CD8-positive, alpha-beta T cell (primary cell): ENCODE measurements at regions of chr17 and their contacts with region 1.

Region 1: GRCh38 chr17:48618256-48618897 is 3.3 kb upstream of the HOXB8 start:
- DNase-seq: peak; percentile 66 to 90 (median 85)
- ATAC-seq: peak; percentile 72
- H3K4me3 ChIP-seq: no peak overlapping the region
- H3K4me3 Mint-ChIP-seq: peak overlapping the region; percentile 42
- H3K27ac ChIP-seq: no peak overlapping the region
- H3K27ac Mint-ChIP-seq: no peak overlapping the region
- H3K4me1 ChIP-seq: peaks cover 35% of the 10 kb centered on the region
- H3K4me1 Mint-ChIP-seq: peaks cover 33% of the 10 kb centered on the region
- H3K27me3 ChIP-seq: peaks cover 64 to 70% of the 10 kb centered on the region in 2 experiments
- H3K27me3 Mint-ChIP-seq: peaks cover 86% of the 10 kb centered on the region
- CTCF ChIP-seq: peak; percentile 98

Region 2: GRCh38 chr17:47776330-47777197 is 841.8 kb before region 1 on chr17:
- CTCF ChIA-PET with region 1: no interaction called
- POLR2A ChIA-PET with region 1: no interaction called
- intact Hi-C with region 1: loop called in 1 of 2 experiments (anchors 5 kb)
- DNase-seq: peak in 6 of 9 experiments; percentile 24 to 73 (median 32)
- ATAC-seq: peak; percentile 96
- H3K4me3 ChIP-seq: no peak overlapping the region
- H3K4me3 Mint-ChIP-seq: no peak overlapping the region
- H3K27ac ChIP-seq: no peak overlapping the region
- H3K27ac Mint-ChIP-seq: no peak overlapping the region
- H3K4me1 ChIP-seq: no peaks in the 10 kb centered on the region
- H3K4me1 Mint-ChIP-seq: peaks cover 3% of the 10 kb centered on the region
- H3K27me3 ChIP-seq: peaks cover 8 to 11% of the 10 kb centered on the region in 2 experiments
- H3K27me3 Mint-ChIP-seq: peaks cover 41% of the 10 kb centered on the region
- CTCF ChIP-seq: peak; percentile 88

Region 3: DNA sequence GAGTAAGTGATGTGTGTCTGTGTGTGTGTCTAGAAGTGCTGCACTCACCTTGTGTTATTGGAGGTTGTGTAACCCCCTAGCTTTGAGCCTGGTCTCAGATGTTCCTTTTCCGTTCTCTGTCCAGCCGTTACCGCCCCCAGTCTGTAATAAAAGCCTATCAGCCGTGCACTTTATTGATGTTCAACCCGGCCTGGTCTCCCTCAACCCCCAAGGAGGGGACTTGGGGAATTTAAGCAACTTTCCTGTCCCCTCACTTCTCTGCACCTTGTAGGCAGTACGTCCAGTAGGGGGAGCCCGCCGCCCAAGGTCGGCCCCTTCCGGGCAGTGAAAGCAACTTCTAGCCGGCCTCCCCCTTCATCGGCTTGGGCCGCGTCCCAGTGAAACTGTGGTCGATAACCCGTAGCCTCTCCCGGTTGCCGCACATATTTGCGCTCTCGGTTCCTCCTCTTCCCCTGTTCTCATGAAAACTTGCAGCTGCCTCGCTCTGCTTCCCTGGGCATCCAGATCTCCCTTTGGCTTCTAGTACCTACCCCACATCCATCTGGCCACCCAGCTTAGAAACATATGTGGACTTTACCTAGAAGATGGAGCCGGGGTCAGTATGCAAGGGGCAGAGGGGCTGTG is 669.1 kb before region 1 on chr17:
- CTCF ChIA-PET with region 1: no interaction called
- POLR2A ChIA-PET with region 1: no interaction called
- intact Hi-C with region 1: loop called in 1 of 2 experiments (anchors 1 kb)
- DNase-seq: peak; percentile 47 to 88 (median 79)
- ATAC-seq: peak; percentile 53
- H3K4me3 ChIP-seq: peak overlapping the region; percentile 26 to 36
- H3K4me3 Mint-ChIP-seq: peak overlapping the region; percentile 82
- H3K27ac ChIP-seq: peak overlapping the region in 1 of 2 experiments; percentile 28
- H3K27ac Mint-ChIP-seq: peak overlapping the region; percentile 81
- H3K4me1 ChIP-seq: peaks cover 51% of the 10 kb centered on the region
- H3K4me1 Mint-ChIP-seq: peaks cover 46% of the 10 kb centered on the region
- H3K27me3 ChIP-seq: no peaks in the 10 kb centered on the region
- H3K27me3 Mint-ChIP-seq: no peaks in the 10 kb centered on the region
- CTCF ChIP-seq: peak; percentile 78

Region 4: DNA sequence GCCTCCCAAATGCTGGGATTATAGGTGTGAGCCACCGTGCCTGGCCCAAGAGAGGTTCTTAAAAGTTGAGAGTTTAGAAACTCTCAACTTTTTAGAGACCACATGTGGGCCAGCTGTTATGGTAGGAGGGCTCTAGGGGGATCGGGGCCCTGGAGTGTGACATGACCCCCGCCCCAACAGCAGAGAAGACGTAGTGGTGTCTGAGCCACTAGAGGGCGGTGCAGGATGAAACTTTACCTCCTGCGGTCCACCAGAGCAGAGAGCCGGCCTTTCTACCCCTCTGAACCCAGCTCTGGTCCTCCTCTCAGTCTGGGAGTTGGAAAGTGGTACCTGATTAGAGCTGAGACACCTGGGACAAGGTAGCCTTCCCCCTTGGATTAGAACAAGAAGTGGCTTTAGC is 640.1 kb before region 1 on chr17:
- CTCF ChIA-PET with region 1: no interaction called
- POLR2A ChIA-PET with region 1: no interaction called
- intact Hi-C with region 1: no loop called
- DNase-seq: peak; percentile 8 to 65 (median 49)
- ATAC-seq: peak; percentile 68
- H3K4me3 ChIP-seq: no peak overlapping the region
- H3K4me3 Mint-ChIP-seq: no peak overlapping the region
- H3K27ac ChIP-seq: no peak overlapping the region
- H3K27ac Mint-ChIP-seq: no peak overlapping the region
- H3K4me1 ChIP-seq: no peaks in the 10 kb centered on the region
- H3K4me1 Mint-ChIP-seq: peaks cover 6% of the 10 kb centered on the region
- H3K27me3 ChIP-seq: no peaks in the 10 kb centered on the region
- H3K27me3 Mint-ChIP-seq: no peaks in the 10 kb centered on the region
- CTCF ChIP-seq: peak; percentile 58

Region 5: DNA sequence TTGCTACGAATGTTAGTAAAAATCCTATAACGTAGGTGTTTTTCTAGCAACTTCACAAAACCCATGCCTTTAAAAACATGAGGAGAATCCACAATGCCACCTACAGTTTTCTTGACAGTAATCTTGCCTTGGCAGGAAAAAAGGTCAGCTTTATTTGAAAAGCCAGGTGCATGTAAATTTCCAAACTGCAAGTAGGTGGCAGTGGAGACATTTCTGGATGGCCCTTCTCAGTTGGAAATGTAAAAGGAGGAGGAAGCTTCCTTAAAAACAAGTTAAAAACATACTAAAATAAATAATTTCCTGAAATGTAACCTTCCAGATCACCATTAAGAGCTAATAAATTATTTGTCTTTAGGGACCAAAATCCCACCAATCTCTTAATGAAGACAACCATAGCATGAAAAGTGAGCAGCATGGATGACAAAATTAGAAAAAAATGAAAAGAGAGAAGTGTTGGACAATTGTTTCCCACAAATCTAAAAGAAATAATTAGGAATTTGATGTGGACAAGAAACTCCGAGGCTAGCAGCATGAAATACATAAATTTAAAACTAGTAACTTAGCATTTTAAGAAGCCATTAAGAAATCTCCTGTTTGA is 358.6 kb before region 1 on chr17:
- CTCF ChIA-PET with region 1: interaction called, 7 read pairs
- POLR2A ChIA-PET with region 1: no interaction called
- intact Hi-C with region 1: loop called in 1 of 2 experiments (anchors 2 kb)
- DNase-seq: peak in 2 of 9 experiments; percentile 10 to 23
- ATAC-seq: no peak
- H3K4me3 ChIP-seq: no peak overlapping the region
- H3K4me3 Mint-ChIP-seq: no peak overlapping the region
- H3K27ac ChIP-seq: no peak overlapping the region
- H3K27ac Mint-ChIP-seq: no peak overlapping the region
- H3K4me1 ChIP-seq: no peaks in the 10 kb centered on the region
- H3K4me1 Mint-ChIP-seq: peaks cover 9% of the 10 kb centered on the region
- H3K27me3 ChIP-seq: no peaks in the 10 kb centered on the region
- H3K27me3 Mint-ChIP-seq: no peaks in the 10 kb centered on the region
- CTCF ChIP-seq: peak; percentile 42

Region 6: DNA sequence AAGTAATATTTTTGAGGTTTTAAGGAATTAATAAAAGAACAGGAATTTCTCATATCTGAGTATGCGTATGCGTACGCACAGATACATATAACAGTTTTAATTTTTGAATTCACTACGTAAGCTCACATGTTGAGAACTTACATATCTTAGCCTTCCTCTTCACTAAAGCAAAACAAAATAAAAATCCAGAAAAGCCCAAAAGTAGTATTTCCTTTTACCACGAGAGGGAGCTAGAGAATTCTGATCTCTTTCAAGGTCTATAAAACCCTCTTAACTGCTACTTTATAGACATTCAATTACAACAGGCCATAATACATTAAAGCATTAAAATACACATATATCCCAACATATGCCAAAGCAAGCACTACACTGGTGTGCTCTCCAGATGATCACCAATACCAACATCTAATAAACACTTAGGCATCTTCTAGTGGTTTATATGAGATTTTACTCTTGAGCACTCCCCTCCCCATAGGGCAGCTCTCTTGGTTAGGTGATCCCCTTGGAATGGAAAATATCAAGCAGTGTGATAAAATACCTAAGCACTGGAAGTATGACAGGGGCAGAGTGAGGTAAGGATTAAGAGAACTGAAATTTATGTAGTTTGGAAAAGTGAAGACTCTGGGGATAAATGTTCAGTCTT is 282.4 kb before region 1 on chr17:
- CTCF ChIA-PET with region 1: interaction called, 4 read pairs
- POLR2A ChIA-PET with region 1: interaction called, 3 read pairs
- intact Hi-C with region 1: loop called in 1 of 2 experiments (anchors 1 kb)
- DNase-seq: peak in 2 of 9 experiments; percentile 68 to 76
- ATAC-seq: peak; percentile 67
- H3K4me3 ChIP-seq: no peak overlapping the region
- H3K4me3 Mint-ChIP-seq: no peak overlapping the region
- H3K27ac ChIP-seq: no peak overlapping the region
- H3K27ac Mint-ChIP-seq: no peak overlapping the region
- H3K4me1 ChIP-seq: no peaks in the 10 kb centered on the region
- H3K4me1 Mint-ChIP-seq: peaks cover 9% of the 10 kb centered on the region
- H3K27me3 ChIP-seq: no peaks in the 10 kb centered on the region
- H3K27me3 Mint-ChIP-seq: no peaks in the 10 kb centered on the region
- CTCF ChIP-seq: peak; percentile 65

Region 7: GRCh38 chr17:48558057-48558830 is 60.1 kb before region 1 on chr17:
- CTCF ChIA-PET with region 1: no interaction called
- POLR2A ChIA-PET with region 1: no interaction called
- intact Hi-C with region 1: no loop called
- DNase-seq: no peak
- ATAC-seq: no peak
- H3K4me3 ChIP-seq: no peak overlapping the region
- H3K4me3 Mint-ChIP-seq: no peak overlapping the region
- H3K27ac ChIP-seq: no peak overlapping the region
- H3K27ac Mint-ChIP-seq: no peak overlapping the region
- H3K4me1 ChIP-seq: peaks cover 10% of the 10 kb centered on the region
- H3K4me1 Mint-ChIP-seq: peaks cover 12% of the 10 kb centered on the region
- H3K27me3 ChIP-seq: peaks cover 0 to 2% of the 10 kb centered on the region in 2 experiments
- H3K27me3 Mint-ChIP-seq: peaks cover 3% of the 10 kb centered on the region
- CTCF ChIP-seq: no peak

Region 8: DNA sequence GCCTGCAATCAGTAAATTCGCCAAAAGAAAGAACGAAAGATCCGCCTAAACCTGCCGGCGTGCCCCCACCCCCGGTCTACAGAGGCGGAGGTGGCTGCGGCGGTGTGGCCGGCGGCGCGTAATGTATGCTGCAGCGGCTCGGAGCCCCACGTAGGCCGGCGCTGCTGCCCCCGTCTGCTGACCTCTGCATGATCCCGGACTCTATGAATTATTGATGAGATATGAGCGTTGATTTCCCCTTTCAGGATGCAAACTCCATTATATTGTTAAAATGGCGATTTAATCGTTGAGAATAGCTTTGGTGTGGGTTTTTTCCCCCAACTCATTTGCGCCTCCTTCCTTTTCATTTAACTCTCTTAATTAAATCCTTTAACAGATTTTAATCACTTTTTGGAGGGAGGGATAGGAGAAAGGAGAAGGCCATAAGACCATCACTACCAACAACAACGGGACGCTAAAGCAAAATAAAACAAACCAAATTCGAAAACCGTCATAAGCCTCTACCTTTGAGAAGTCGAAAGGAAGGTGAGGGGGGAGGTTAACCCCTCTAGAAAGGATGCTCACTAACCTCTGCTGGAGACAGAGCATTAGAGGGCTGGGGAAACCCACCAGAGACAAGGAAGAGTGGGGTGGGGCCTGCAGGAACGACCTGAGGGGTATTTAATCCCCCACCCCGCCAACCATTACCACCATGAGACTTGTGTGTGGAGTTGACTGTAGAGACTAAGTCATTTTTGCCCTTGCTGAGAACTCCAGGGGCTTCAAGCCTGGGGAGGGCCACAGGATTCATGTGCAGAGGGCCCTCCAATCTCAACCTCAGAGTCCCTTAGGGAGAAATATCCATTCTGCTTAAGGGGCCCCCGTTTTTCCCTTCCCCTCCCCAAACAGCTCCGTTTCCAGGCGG is 31.8 kb before region 1 on chr17:
- CTCF ChIA-PET with region 1: interaction called, 32 read pairs
- POLR2A ChIA-PET with region 1: no interaction called
- intact Hi-C with region 1: no loop called
- DNase-seq: peak in 4 of 9 experiments; percentile 29 to 60 (median 48)
- ATAC-seq: peak; percentile 22
- H3K4me3 ChIP-seq: peak overlapping the region; percentile 75 to 81
- H3K4me3 Mint-ChIP-seq: peak overlapping the region; percentile 96
- H3K27ac ChIP-seq: no peak overlapping the region
- H3K27ac Mint-ChIP-seq: peak overlapping the region; percentile 2
- H3K4me1 ChIP-seq: peaks cover 27% of the 10 kb centered on the region
- H3K4me1 Mint-ChIP-seq: peaks cover 32% of the 10 kb centered on the region
- H3K27me3 ChIP-seq: peaks cover 12 to 46% of the 10 kb centered on the region in 2 experiments
- H3K27me3 Mint-ChIP-seq: peaks cover 83% of the 10 kb centered on the region
- CTCF ChIP-seq: no peak

Region 9: DNA sequence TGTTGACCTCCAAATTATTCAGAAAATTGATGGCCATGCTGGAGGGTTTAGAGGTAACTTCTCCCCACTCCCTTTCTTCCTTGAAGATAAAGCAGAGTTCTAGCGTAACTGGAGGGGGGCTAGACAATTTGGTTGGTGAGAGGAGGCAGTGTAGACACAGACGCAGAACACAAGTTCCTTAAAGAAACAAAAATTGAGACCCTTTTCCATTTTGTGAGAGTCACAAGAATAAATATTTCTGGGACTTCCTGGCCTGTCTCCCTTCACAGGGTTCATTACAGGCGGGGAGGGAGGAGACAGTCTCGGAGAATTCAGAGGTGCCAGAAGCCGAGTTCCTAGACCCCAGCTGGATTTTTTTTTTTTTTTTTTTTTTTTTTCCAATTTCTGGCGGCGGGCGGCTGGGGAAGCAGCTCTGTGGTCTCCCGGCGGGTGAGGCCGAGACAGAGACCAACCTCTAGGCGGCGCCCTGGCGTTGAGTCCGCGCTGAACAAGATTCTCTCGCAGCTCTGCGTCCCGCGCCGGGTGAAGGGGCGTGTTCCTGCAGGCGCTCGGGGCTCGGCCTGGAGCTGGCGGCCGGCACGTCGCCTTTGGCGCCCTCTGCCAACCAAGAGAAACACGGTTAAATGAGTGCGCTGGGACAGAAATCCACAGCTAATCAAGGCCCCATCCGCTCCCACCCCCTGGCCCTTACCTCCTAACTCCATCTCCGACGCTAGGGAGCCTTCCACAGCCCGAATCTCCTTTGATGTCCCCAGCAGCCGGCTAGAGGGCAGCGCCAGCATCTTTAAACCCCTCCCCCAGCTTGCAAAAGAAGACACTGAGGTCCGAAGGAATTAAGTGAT is 18.0 kb after region 1 on chr17:
- CTCF ChIA-PET with region 1: interaction called, 11 read pairs
- POLR2A ChIA-PET with region 1: interaction called, 4 read pairs
- intact Hi-C with region 1: no loop called
- DNase-seq: peak; percentile 36 to 79 (median 70)
- ATAC-seq: peak; percentile 88
- H3K4me3 ChIP-seq: peak overlapping the region in 1 of 2 experiments; percentile 22
- H3K4me3 Mint-ChIP-seq: peak overlapping the region; percentile 3
- H3K27ac ChIP-seq: no peak overlapping the region
- H3K27ac Mint-ChIP-seq: no peak overlapping the region
- H3K4me1 ChIP-seq: peaks cover 15% of the 10 kb centered on the region
- H3K4me1 Mint-ChIP-seq: peaks cover 14% of the 10 kb centered on the region
- H3K27me3 ChIP-seq: peaks cover 27 to 47% of the 10 kb centered on the region in 2 experiments
- H3K27me3 Mint-ChIP-seq: peaks cover 82% of the 10 kb centered on the region
- CTCF ChIP-seq: peak; percentile 72

Region 10: DNA sequence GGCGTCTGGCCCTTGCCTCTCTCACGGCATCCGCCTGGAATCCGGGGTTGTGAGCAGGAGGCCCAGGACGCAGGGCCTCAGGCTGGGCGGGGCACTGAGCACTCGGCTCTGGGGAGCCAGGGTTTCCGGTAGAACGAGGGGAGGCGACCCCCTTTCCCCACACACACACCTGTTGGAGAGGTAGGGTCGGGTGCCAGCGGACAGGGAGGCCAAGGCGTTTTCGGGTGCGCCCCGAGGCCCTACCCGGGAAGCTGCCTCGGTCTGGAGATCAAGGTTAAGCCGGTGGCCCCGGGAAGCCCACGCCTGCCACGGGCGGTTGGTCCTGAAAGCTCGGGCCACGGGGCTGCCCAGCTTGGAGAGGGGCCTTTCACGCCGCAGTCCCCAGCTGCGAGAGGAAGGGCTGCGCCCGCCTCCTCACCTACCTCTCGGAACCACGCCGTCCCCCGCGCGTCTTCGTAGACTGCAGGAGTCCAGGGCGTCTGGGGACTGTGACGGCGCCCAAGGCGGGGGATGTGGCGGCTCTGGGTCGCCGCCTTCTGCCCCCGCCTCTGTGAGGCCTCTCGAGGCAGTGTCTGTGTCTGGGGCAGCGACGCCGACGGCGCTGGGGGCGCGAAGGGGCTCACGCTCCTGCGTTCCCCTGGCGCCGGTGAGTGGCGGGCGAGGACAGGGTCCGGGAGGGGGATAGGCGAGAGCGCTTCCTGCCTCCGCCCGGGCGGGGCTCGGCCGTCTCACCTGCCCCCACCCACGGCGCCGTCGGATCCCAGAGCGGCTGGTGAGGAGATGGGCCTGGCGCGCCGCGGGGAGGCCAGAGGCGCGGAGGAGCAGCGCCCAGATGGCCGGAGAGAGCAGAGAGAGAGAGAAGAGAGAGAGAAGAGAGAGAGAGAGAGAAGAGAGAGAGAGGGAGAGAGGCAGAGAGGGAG is 28.1 kb after region 1 on chr17:
- CTCF ChIA-PET with region 1: no interaction called
- POLR2A ChIA-PET with region 1: no interaction called
- intact Hi-C with region 1: no loop called
- DNase-seq: peak in 5 of 9 experiments; percentile 24 to 68 (median 42)
- ATAC-seq: peak; percentile 69
- H3K4me3 ChIP-seq: peak overlapping the region; percentile 56 to 77
- H3K4me3 Mint-ChIP-seq: peak overlapping the region; percentile 86
- H3K27ac ChIP-seq: peak overlapping the region in 1 of 2 experiments; percentile 36
- H3K27ac Mint-ChIP-seq: no peak overlapping the region
- H3K4me1 ChIP-seq: peaks cover 16% of the 10 kb centered on the region
- H3K4me1 Mint-ChIP-seq: peaks cover 22% of the 10 kb centered on the region
- H3K27me3 ChIP-seq: peaks cover 22 to 34% of the 10 kb centered on the region in 2 experiments
- H3K27me3 Mint-ChIP-seq: peaks cover 55% of the 10 kb centered on the region
- CTCF ChIP-seq: no peak

Region 11: DNA sequence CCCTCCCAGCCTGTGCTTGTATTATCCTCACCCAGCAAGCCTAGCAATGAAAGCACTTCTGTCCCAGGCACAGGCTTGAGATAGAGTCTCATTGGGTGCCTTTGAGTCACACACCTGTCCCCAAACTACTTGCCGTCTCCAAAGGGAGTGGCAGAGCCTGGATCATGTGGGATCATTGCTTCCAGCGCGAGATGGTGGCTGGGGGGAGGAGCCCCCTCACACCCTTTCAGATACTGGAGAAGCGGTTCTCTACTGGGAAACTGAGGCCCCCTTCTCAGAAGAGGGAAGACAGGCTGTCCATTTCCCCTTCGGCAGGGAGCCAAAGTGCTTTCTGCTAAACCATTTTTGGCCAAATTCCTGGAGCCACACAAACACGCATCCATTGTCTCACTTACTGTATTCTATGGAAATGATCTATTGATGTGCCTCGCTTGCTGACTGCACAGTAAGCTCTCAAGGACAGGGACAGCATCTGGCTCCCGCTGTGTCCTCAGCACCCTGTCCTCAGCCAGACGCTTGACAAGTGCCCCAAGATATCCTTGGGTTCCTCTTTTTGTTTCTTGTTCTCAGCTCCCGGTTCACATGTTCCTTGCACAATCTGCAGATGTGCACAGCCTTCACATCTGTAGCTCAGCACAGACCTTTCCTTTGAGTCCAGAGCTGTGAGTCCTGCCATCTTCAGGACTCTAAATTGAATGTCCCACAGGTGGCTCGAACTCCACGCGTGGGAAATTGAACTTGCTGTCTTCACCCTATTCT is 1402.6 kb after region 1 on chr17:
- CTCF ChIA-PET with region 1: no interaction called
- POLR2A ChIA-PET with region 1: no interaction called
- intact Hi-C with region 1: no loop called
- DNase-seq: no peak
- ATAC-seq: no peak
- H3K4me3 ChIP-seq: no peak overlapping the region
- H3K4me3 Mint-ChIP-seq: no peak overlapping the region
- H3K27ac ChIP-seq: no peak overlapping the region
- H3K27ac Mint-ChIP-seq: no peak overlapping the region
- H3K4me1 ChIP-seq: no peaks in the 10 kb centered on the region
- H3K4me1 Mint-ChIP-seq: no peaks in the 10 kb centered on the region
- H3K27me3 ChIP-seq: no peaks in the 10 kb centered on the region
- H3K27me3 Mint-ChIP-seq: peaks cover 19% of the 10 kb centered on the region
- CTCF ChIP-seq: no peak